ENCODE measurements at regions of chr11 and their contacts with region 1.

Region 1: GRCh38 chr11:78798660-78799059 is 224.0 kb upstream of the NARS2 start:
- DNase-seq: no peak
- ATAC-seq: peak; percentile 99
- H3K4me3 ChIP-seq: no peak overlapping the region
- H3K27ac ChIP-seq: no peak overlapping the region
- H3K4me1 ChIP-seq: no peaks in the 10 kb centered on the region
- H3K27me3 ChIP-seq: peaks cover 0 to 1% of the 10 kb centered on the region in 2 experiments; a peak in 3 of 4 replicates
- CTCF ChIP-seq: peak; percentile 74 to 96 (median 87)
- EP300 ChIP-seq: no peak
- POLR2A ChIP-seq: no peak
- RAD21 ChIP-seq: peak; percentile 58

Region 2: DNA sequence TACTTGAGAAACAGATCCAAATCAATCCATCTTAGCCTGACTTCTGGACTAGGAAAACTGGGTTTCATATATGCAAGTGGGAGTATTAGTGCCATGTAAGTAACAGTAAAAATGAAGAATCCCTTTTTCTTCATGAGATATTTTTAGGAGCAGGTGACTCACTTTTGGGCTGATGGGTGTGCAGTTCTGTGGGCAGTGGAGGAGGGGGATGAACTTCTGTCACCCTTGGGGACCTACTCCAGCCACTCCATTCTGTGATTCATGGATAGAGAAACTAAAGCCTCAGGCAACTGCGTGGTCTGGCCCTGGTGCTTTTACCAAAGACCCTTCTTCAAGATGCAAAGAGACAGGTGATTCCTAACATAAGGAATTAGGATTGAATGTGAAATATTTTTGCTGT is 15.4 kb before region 1 on chr11:
- CTCF ChIA-PET with region 1: interaction called, 15 read pairs
- POLR2A ChIA-PET with region 1: no interaction called
- RAD21 ChIA-PET with region 1: no interaction called
- SMC1A ChIA-PET with region 1: interaction called, 8 read pairs
- in situ Hi-C with region 1: no loop called
- intact Hi-C with region 1: no loop called
- DNase-seq: no peak
- ATAC-seq: no peak
- H3K4me3 ChIP-seq: no peak overlapping the region
- H3K27ac ChIP-seq: no peak overlapping the region
- H3K4me1 ChIP-seq: no peaks in the 10 kb centered on the region
- H3K27me3 ChIP-seq: no peaks in the 10 kb centered on the region; a peak in 1 of 4 replicates
- CTCF ChIP-seq: no peak
- EP300 ChIP-seq: no peak
- POLR2A ChIP-seq: no peak
- RAD21 ChIP-seq: no peak

Region 3: DNA sequence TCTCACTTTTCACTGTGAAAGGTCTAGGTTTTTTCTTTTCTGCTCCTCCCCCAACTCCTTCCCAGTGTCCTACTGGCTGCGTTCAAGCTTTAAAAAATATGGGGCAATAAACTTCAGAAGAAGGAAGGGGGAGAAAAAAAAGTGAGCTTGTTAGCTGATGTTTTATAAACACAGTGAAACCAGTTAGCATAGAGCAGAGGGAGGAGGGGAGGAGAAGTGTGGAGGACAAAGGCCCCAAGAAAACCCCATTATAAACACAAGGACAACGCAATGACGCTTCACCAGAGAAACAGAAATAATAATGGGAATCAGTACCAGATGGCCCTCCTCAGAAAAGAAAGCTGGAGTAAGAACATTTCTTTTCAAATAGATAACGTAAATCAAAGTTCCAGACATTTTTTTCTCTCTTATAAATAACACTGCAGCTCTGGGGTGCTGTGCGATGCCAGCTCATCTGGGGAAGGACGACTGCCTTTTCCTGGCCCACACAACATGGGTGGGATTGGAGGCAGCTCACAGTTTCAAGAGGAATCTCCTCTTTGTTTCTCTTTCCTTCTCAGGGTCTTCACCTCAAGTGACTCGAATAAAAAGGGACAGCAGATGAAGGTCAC is 11.4 kb after region 1 on chr11:
- CTCF ChIA-PET with region 1: interaction called, 10 read pairs
- POLR2A ChIA-PET with region 1: no interaction called
- RAD21 ChIA-PET with region 1: no interaction called
- SMC1A ChIA-PET with region 1: interaction called, 4 read pairs
- in situ Hi-C with region 1: no loop called
- intact Hi-C with region 1: no loop called
- DNase-seq: no peak
- ATAC-seq: no peak
- H3K4me3 ChIP-seq: no peak overlapping the region
- H3K27ac ChIP-seq: no peak overlapping the region
- H3K4me1 ChIP-seq: no peaks in the 10 kb centered on the region
- H3K27me3 ChIP-seq: no peaks in the 10 kb centered on the region
- CTCF ChIP-seq: no peak
- EP300 ChIP-seq: no peak
- POLR2A ChIP-seq: no peak
- RAD21 ChIP-seq: no peak

Region 4: GRCh38 chr11:79076526-79077115 is 278.0 kb after region 1 on chr11:
- CTCF ChIA-PET with region 1: no interaction called
- POLR2A ChIA-PET with region 1: no interaction called
- RAD21 ChIA-PET with region 1: no interaction called
- SMC1A ChIA-PET with region 1: no interaction called
- in situ Hi-C with region 1: no loop called
- intact Hi-C with region 1: loop called (anchors 1 kb)
- DNase-seq: no peak
- ATAC-seq: peak; percentile 45; the same call in 1 of the 3 replicates
- H3K4me3 ChIP-seq: no peak overlapping the region
- H3K27ac ChIP-seq: no peak overlapping the region
- H3K4me1 ChIP-seq: no peaks in the 10 kb centered on the region
- H3K27me3 ChIP-seq: no peaks in the 10 kb centered on the region; a peak in 1 of 4 replicates
- CTCF ChIP-seq: peak; percentile 38 to 54 (median 43); a peak in 5 of 6 replicates
- EP300 ChIP-seq: no peak
- POLR2A ChIP-seq: no peak
- RAD21 ChIP-seq: peak; percentile 36; the same call in 1 of the 2 replicates

Measured in GM12878 (cell line).